HCT116 (cell line): ENCODE measurements at regions of chr7 and their contacts with region 1.

Region 1: GRCh38 chr7:114026486-114027089 is 107.8 kb upstream of the PPP1R3A start:
- DNase-seq: peak; percentile 45
- ATAC-seq: no peak
- H3K4me3 ChIP-seq: no peak overlapping the region
- H3K27ac ChIP-seq: no peak overlapping the region
- H3K4me1 ChIP-seq: no peaks in the 10 kb centered on the region
- H3K27me3 ChIP-seq: no peaks in the 10 kb centered on the region
- CTCF ChIP-seq: peak; percentile 38 to 61 (median 56); a peak in 5 of 6 replicates
- POLR2A ChIP-seq: no peak
- RAD21 ChIP-seq: peak; percentile 76

Region 2: GRCh38 chr7:114405427-114405826 is 378.8 kb after region 1 on chr7:
- CTCF ChIA-PET with region 1: no interaction called
- POLR2A ChIA-PET with region 1: no interaction called
- RAD21 ChIA-PET with region 1: interaction called in 1 of 2 experiments, 6 read pairs
- intact Hi-C with region 1: loop called (anchors 5 kb)
- DNase-seq: peak; percentile 8
- ATAC-seq: peak; percentile 74
- H3K4me3 ChIP-seq: no peak overlapping the region
- H3K27ac ChIP-seq: no peak overlapping the region
- H3K4me1 ChIP-seq: no peaks in the 10 kb centered on the region
- H3K27me3 ChIP-seq: no peaks in the 10 kb centered on the region
- CTCF ChIP-seq: peak; percentile 41 to 67 (median 51); a peak in 4 of 6 replicates
- POLR2A ChIP-seq: no peak
- RAD21 ChIP-seq: peak; percentile 71

Region 3: GRCh38 chr7:114663502-114663901 is 636.9 kb after region 1 on chr7:
- CTCF ChIA-PET with region 1: no interaction called
- POLR2A ChIA-PET with region 1: no interaction called
- RAD21 ChIA-PET with region 1: no interaction called
- intact Hi-C with region 1: loop called (anchors 2 kb)
- DNase-seq: peak; percentile 46
- ATAC-seq: peak; percentile 63; the same call in 1 of the 2 replicates
- H3K4me3 ChIP-seq: no peak overlapping the region
- H3K27ac ChIP-seq: no peak overlapping the region
- H3K4me1 ChIP-seq: no peaks in the 10 kb centered on the region
- H3K27me3 ChIP-seq: no peaks in the 10 kb centered on the region
- CTCF ChIP-seq: peak; percentile 26 to 47 (median 37); a peak in 3 of 6 replicates
- POLR2A ChIP-seq: no peak
- RAD21 ChIP-seq: peak; percentile 62

Region 4: GRCh38 chr7:115910541-115911164 is 1884.1 kb after region 1 on chr7:
- CTCF ChIA-PET with region 1: interaction called, 3 read pairs
- POLR2A ChIA-PET with region 1: no interaction called
- RAD21 ChIA-PET with region 1: no interaction called
- intact Hi-C with region 1: loop called (anchors 10 kb)
- DNase-seq: peak; percentile 41
- ATAC-seq: peak; percentile 75
- H3K4me3 ChIP-seq: no peak overlapping the region
- H3K27ac ChIP-seq: no peak overlapping the region
- H3K4me1 ChIP-seq: peaks cover 0 to 7% of the 10 kb centered on the region in 2 experiments; a peak in 1 of 4 replicates
- H3K27me3 ChIP-seq: no peaks in the 10 kb centered on the region
- CTCF ChIP-seq: peak; percentile 58 to 72 (median 65); a peak in 5 of 6 replicates
- POLR2A ChIP-seq: no peak
- RAD21 ChIP-seq: peak; percentile 80